ENCODE measurements at regions of chr18 and their contacts with region 1.

Region 1: DNA sequence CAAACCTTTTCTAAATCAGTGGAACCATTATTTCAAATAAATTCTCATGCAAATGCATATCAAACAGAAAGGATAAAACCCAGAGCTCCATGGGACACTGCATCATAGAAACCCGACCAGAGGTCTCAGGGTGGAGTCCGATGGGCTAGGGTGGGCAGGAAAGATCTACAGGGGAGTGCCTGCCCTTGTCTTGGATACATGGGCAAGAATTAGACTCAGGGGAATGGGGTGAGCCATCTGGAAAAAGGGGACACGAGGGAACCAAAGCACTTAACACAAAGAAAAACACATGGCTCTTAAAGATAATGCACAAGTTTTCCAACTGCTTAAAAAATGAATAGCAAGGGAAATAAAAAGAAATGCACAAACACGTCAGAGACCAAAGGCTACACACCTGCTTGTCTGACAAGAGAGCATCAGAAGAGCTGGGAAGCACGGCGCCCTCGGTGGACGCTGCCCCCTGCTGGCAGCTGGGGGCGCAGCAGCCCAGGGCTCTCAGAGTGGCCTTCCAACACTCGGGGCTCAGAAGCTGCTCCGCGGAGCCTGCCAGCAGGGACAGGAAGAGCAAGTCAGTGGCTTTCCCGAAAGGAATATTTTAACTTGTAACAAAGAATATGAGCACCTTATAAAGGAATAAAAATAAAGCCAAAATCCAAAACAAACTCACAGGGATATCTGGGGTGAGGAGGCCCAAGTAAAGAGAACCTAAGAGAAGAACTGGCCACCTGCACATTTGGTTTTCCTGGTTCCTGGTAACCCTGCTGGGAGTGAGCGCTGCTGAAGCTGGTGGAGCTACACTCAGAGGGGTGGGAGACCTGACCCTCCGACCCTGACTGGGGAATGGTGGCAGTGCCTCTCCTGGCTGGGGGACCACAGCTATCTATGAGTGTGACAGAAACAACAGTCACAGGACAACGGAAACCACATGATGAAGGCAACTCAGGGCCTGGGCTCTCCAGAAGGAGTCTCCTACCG is 54.5 kb downstream of the SIGLEC15 start:
- DNase-seq: peak; percentile 53 to 86 (median 69)
- ATAC-seq: peak; percentile 98
- H3K4me3 ChIP-seq: no peak overlapping the region
- H3K4me3 Mint-ChIP-seq: no peak overlapping the region
- H3K27ac ChIP-seq: no peak overlapping the region
- H3K27ac Mint-ChIP-seq: peak overlapping the region; percentile 69
- H3K4me1 ChIP-seq: peaks cover 7% of the 10 kb centered on the region
- H3K4me1 Mint-ChIP-seq: peaks cover 15% of the 10 kb centered on the region
- H3K27me3 ChIP-seq: no peaks in the 10 kb centered on the region
- H3K27me3 Mint-ChIP-seq: no peaks in the 10 kb centered on the region
- CTCF ChIP-seq: peak; percentile 99

Region 2: DNA sequence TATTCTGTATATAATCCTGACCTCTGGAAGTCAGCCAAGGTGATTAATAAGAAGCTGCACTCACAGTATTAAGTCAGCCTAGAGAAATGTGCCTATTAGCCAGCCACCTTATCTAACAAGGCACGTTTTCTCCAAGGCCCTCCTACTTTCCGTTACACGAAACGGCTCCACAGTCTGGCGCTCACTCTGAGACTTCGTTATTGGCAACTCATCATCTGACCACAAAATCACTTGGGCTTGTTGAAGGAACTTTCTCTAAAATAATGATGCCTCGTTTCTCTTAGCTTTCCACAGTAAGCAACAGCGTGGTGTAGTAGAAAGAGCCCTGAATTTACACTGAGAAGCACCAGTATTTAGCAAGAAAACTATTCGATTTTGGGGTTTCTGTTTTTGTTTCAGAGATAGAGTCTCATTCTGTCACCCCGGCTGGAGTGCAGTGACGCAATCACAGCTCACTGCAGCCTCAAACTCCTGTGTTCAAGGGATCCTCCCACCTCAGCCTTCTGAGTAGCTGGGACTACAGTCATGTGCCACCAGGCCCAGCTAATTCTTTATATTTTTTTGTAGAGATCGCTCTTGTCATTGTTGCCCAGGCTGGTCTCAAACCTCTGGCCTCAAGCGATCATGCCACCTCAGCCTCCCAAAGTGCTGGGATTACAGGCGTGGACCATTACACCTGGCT is 209.5 kb before region 1 on chr18:
- CTCF ChIA-PET with region 1: interaction called, 192 read pairs
- POLR2A ChIA-PET with region 1: interaction called, 17 read pairs
- intact Hi-C with region 1: loop called (anchors 1 kb)
- DNase-seq: peak in 8 of 9 experiments; percentile 6 to 77 (median 40)
- ATAC-seq: peak; percentile 68
- H3K4me3 ChIP-seq: no peak overlapping the region
- H3K4me3 Mint-ChIP-seq: peak overlapping the region; percentile 46
- H3K27ac ChIP-seq: peak overlapping the region; percentile 33 to 54
- H3K27ac Mint-ChIP-seq: peak overlapping the region; percentile 79
- H3K4me1 ChIP-seq: peaks cover 53% of the 10 kb centered on the region
- H3K4me1 Mint-ChIP-seq: peaks cover 53% of the 10 kb centered on the region
- H3K27me3 ChIP-seq: no peaks in the 10 kb centered on the region
- H3K27me3 Mint-ChIP-seq: no peaks in the 10 kb centered on the region
- CTCF ChIP-seq: no peak

Region 3: GRCh38 chr18:45722899-45723298 is 157.1 kb before region 1 on chr18:
- CTCF ChIA-PET with region 1: interaction called, 34 read pairs
- POLR2A ChIA-PET with region 1: no interaction called
- intact Hi-C with region 1: loop called in 1 of 2 experiments (anchors 1 kb)
- DNase-seq: peak; percentile 33 to 77 (median 58)
- ATAC-seq: peak; percentile 73
- H3K4me3 ChIP-seq: no peak overlapping the region
- H3K4me3 Mint-ChIP-seq: no peak overlapping the region
- H3K27ac ChIP-seq: no peak overlapping the region
- H3K27ac Mint-ChIP-seq: no peak overlapping the region
- H3K4me1 ChIP-seq: no peaks in the 10 kb centered on the region
- H3K4me1 Mint-ChIP-seq: no peaks in the 10 kb centered on the region
- H3K27me3 ChIP-seq: no peaks in the 10 kb centered on the region
- H3K27me3 Mint-ChIP-seq: peaks cover 2% of the 10 kb centered on the region
- CTCF ChIP-seq: peak; percentile 67

Region 4: DNA sequence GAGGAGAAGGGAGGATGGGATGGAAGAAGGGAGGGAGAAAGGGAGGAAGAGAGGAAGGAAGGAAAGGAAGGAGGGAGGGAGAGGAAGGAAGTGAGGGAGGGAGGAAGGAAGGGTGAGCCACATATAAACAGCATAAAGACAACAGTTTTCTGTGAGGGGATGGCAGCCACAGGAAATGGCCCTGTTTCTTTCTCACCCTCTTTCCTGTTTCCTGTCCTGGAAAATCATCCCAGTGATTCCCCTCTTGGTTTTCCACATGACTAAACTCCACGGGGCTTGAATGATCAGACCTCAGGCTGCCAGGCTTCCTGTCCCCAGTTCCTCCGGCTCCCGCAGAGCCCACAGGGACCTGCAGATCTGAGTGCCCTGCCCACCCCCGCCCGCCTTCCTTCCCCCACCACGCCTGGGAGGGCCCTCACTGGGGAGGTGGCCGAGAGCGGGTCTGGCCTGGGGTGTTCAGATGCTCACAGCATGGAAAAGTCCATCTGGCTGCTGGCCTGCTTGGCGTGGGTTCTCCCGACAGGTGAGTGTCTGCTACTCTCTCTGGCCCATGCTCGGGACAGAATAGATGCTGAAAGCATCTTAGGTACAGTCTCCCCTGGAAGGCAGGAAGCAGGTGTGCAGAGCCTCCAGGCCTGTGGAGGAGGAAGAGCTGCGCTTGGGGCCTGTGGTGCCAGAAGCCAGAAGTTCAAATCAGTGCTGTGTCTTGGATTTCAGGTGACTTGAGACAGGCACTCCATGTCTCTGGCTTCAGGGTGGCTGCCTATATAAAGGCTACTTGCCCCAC is 54.5 kb before region 1 on chr18 and contains the start of gene SIGLEC15:
- CTCF ChIA-PET with region 1: no interaction called
- POLR2A ChIA-PET with region 1: no interaction called
- intact Hi-C with region 1: no loop called
- DNase-seq: no peak
- ATAC-seq: no peak
- H3K4me3 ChIP-seq: no peak within 1 kb of the TSS
- H3K4me3 Mint-ChIP-seq: no peak within 1 kb of the TSS
- H3K27ac ChIP-seq: no peak within 1 kb of the TSS
- H3K27ac Mint-ChIP-seq: no peak within 1 kb of the TSS
- H3K4me1 ChIP-seq: peaks cover 23% of the 10 kb centered on the region
- H3K4me1 Mint-ChIP-seq: peaks cover 27% of the 10 kb centered on the region
- H3K27me3 ChIP-seq: no peaks in the 10 kb centered on the region
- H3K27me3 Mint-ChIP-seq: peaks cover 2% of the 10 kb centered on the region
- CTCF ChIP-seq: no peak
- total RNA-seq, gene SIGLEC15: not detected

Region 5: DNA sequence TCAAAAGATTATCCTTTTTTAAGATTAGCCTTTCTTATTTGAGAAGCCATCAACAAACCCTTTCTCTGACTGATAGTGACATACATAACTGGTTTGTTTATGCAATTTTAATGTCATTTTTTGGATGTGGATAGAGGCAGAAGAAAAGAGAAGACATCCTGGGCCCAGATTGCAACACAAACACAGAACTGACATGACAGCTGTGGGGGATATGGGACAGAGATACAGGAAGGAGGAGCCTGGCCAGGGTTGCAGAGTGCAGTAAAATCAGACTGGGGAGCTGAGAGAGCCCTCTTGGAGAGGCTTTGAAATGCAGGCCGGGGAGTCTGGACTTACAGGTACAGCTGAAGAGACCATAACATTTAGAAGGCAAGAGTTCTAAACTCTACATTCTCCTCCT is 10.6 kb after region 1 on chr18:
- CTCF ChIA-PET with region 1: interaction called, 12 read pairs
- POLR2A ChIA-PET with region 1: no interaction called
- intact Hi-C with region 1: no loop called
- DNase-seq: peak in 1 of 9 experiments; percentile 21
- ATAC-seq: no peak
- H3K4me3 ChIP-seq: no peak overlapping the region
- H3K4me3 Mint-ChIP-seq: no peak overlapping the region
- H3K27ac ChIP-seq: peak overlapping the region in 1 of 2 experiments; percentile 12
- H3K27ac Mint-ChIP-seq: peak overlapping the region; percentile 34
- H3K4me1 ChIP-seq: no peaks in the 10 kb centered on the region
- H3K4me1 Mint-ChIP-seq: peaks cover 3% of the 10 kb centered on the region
- H3K27me3 ChIP-seq: no peaks in the 10 kb centered on the region
- H3K27me3 Mint-ChIP-seq: no peaks in the 10 kb centered on the region
- CTCF ChIP-seq: no peak

Region 6: GRCh38 chr18:45920367-45920766 is 40.4 kb after region 1 on chr18:
- CTCF ChIA-PET with region 1: no interaction called
- POLR2A ChIA-PET with region 1: no interaction called
- intact Hi-C with region 1: no loop called
- DNase-seq: peak in 2 of 9 experiments; percentile 26 to 31
- ATAC-seq: no peak
- H3K4me3 ChIP-seq: no peak overlapping the region
- H3K4me3 Mint-ChIP-seq: no peak overlapping the region
- H3K27ac ChIP-seq: no peak overlapping the region
- H3K27ac Mint-ChIP-seq: no peak overlapping the region
- H3K4me1 ChIP-seq: peaks cover 6% of the 10 kb centered on the region
- H3K4me1 Mint-ChIP-seq: peaks cover 16% of the 10 kb centered on the region
- H3K27me3 ChIP-seq: no peaks in the 10 kb centered on the region
- H3K27me3 Mint-ChIP-seq: no peaks in the 10 kb centered on the region
- CTCF ChIP-seq: no peak

Region 7: DNA sequence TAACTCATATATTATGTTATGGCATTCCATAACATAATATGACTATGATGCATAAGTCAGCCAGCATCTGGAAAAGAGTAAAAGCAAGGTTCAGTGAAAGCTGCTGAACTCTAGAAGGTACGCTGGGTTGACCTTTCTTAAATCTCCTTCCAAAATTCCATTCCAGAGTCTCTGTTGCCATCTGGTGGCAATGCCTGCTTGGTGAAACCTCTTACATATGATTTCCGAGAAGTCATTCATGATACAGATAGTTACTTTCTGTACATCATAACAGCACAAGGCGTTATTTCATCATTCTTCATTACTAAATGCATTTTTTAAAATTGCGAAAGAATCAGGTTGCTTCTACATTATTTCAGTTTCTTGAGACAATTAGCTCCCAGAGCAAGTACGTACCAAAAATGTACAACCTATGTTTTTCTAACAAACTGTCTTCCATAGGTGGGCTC is 94.1 kb after region 1 on chr18:
- CTCF ChIA-PET with region 1: interaction called, 10 read pairs
- POLR2A ChIA-PET with region 1: no interaction called
- intact Hi-C with region 1: no loop called
- DNase-seq: peak; percentile 39 to 81 (median 63)
- ATAC-seq: peak; percentile 83
- H3K4me3 ChIP-seq: no peak overlapping the region
- H3K4me3 Mint-ChIP-seq: no peak overlapping the region
- H3K27ac ChIP-seq: no peak overlapping the region
- H3K27ac Mint-ChIP-seq: no peak overlapping the region
- H3K4me1 ChIP-seq: peaks cover 7% of the 10 kb centered on the region
- H3K4me1 Mint-ChIP-seq: peaks cover 6% of the 10 kb centered on the region
- H3K27me3 ChIP-seq: no peaks in the 10 kb centered on the region
- H3K27me3 Mint-ChIP-seq: no peaks in the 10 kb centered on the region
- CTCF ChIP-seq: peak; percentile 86

Measured in CD8-positive, alpha-beta T cell (primary cell).